B cell (primary cell): ENCODE measurements at regions of chr2 and their contacts with region 1.

Region 1: GRCh38 chr2:135052042-135052876 is at the start of gene RAB3GAP1:
- DNase-seq: peak; percentile 91
- ATAC-seq: peak; percentile 90
- H3K4me3 ChIP-seq: peak within 1 kb of the TSS; percentile 91 to 97 (median 96)
- H3K4me3 Mint-ChIP-seq: peak within 1 kb of the TSS; percentile 91
- H3K27ac ChIP-seq: peak within 1 kb of the TSS; percentile 98 to 99
- H3K27ac Mint-ChIP-seq: peak within 1 kb of the TSS; percentile 98
- H3K4me1 ChIP-seq: peaks cover 17 to 19% of the 10 kb centered on the region in 2 donors
- H3K4me1 Mint-ChIP-seq: peaks cover 37% of the 10 kb centered on the region
- H3K27me3 ChIP-seq: no peaks in the 10 kb centered on the region
- H3K27me3 Mint-ChIP-seq: no peaks in the 10 kb centered on the region
- CTCF ChIP-seq: no peak
- total RNA-seq, gene RAB3GAP1: 61.5 and 62.2 TPM in 2 replicates

Region 2: DNA sequence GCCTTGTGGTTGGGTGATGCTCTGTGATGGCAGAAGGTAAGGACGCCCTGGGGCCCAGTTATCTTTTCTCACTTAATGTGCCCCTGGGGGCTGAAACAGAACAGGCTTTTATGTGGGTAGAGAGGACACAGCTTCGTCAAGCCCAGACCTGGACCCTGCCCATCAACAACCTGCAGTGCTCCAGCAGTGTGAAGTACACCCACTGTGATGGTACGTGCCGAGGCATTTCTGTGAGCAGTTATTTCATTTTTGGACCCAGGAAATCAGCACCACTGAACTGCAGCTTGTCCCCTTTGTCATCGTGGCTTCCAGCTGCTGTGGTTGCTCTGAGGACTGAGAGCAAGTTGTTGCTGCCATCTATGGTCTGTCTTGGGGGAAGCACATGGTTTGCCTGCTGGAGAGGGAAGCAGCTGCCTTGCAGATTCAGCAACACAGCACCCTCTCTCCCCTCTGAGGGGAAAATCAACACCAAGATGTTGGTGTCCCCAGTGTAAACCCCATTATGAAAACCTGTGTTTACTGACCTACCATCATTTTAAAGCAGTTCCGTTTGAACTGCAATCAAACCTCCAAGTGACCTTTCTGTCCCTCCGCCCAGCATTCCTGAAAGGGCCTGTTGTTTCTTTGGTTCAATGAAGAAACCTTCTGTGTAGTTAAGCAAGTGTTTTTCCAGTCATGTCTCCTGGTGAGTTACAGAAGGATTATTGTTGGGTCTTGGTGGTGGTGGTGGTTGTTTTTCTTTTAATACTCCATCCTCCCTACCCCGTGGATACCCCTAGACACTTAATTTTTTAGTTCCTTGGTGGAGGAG is 640.2 kb before region 1 on chr2:
- CTCF ChIA-PET with region 1: no interaction called
- POLR2A ChIA-PET with region 1: no interaction called
- intact Hi-C with region 1: no loop called
- DNase-seq: peak; percentile 89
- ATAC-seq: peak; percentile 93
- H3K4me3 ChIP-seq: peak overlapping the region in 2 of 5 experiments; percentile 6 to 18
- H3K4me3 Mint-ChIP-seq: peak overlapping the region; percentile 59
- H3K27ac ChIP-seq: peak overlapping the region; percentile 64 to 74
- H3K27ac Mint-ChIP-seq: peak overlapping the region; percentile 86
- H3K4me1 ChIP-seq: peaks cover 45 to 50% of the 10 kb centered on the region in 2 donors
- H3K4me1 Mint-ChIP-seq: peaks cover 49% of the 10 kb centered on the region
- H3K27me3 ChIP-seq: no peaks in the 10 kb centered on the region
- H3K27me3 Mint-ChIP-seq: no peaks in the 10 kb centered on the region
- CTCF ChIP-seq: peak; percentile 81

Region 3: GRCh38 chr2:134739879-134740301 is 312.4 kb before region 1 on chr2:
- CTCF ChIA-PET with region 1: no interaction called
- POLR2A ChIA-PET with region 1: no interaction called
- intact Hi-C with region 1: loop called (anchors 10 kb)
- DNase-seq: peak; percentile 91
- ATAC-seq: peak; percentile 81
- H3K4me3 ChIP-seq: peak overlapping the region in 2 of 5 experiments; percentile 28 to 46
- H3K4me3 Mint-ChIP-seq: peak overlapping the region; percentile 62
- H3K27ac ChIP-seq: peak overlapping the region; percentile 86 to 90
- H3K27ac Mint-ChIP-seq: peak overlapping the region; percentile 93
- H3K4me1 ChIP-seq: peaks cover 64 to 68% of the 10 kb centered on the region in 2 donors
- H3K4me1 Mint-ChIP-seq: peaks cover 71% of the 10 kb centered on the region
- H3K27me3 ChIP-seq: no peaks in the 10 kb centered on the region
- H3K27me3 Mint-ChIP-seq: no peaks in the 10 kb centered on the region
- CTCF ChIP-seq: no peak

Region 4: GRCh38 chr2:134918526-134919340 is 133.5 kb before region 1 on chr2 and contains the start of gene CCNT2:
- CTCF ChIA-PET with region 1: no interaction called
- POLR2A ChIA-PET with region 1: no interaction called
- intact Hi-C with region 1: loop called (anchors 1 kb)
- DNase-seq: peak; percentile 100
- ATAC-seq: peak; percentile 82
- H3K4me3 ChIP-seq: peak within 1 kb of the TSS; percentile 78 to 98 (median 93)
- H3K4me3 Mint-ChIP-seq: peak within 1 kb of the TSS; percentile 85
- H3K27ac ChIP-seq: peak within 1 kb of the TSS; percentile 94 to 96
- H3K27ac Mint-ChIP-seq: peak within 1 kb of the TSS; percentile 94
- H3K4me1 ChIP-seq: peaks cover 31 to 32% of the 10 kb centered on the region in 2 donors
- H3K4me1 Mint-ChIP-seq: peaks cover 48% of the 10 kb centered on the region
- H3K27me3 ChIP-seq: no peaks in the 10 kb centered on the region
- H3K27me3 Mint-ChIP-seq: no peaks in the 10 kb centered on the region
- CTCF ChIP-seq: no peak
- total RNA-seq, gene CCNT2: 86.7 and 91.0 TPM in 2 replicates

Region 5: GRCh38 chr2:134943540-134943939 is 108.7 kb before region 1 on chr2:
- CTCF ChIA-PET with region 1: no interaction called
- POLR2A ChIA-PET with region 1: no interaction called
- intact Hi-C with region 1: loop called (anchors 10 kb)
- DNase-seq: peak; percentile 47
- ATAC-seq: peak; percentile 45
- H3K4me3 ChIP-seq: peak overlapping the region in 1 of 5 experiments; percentile 19
- H3K4me3 Mint-ChIP-seq: peak overlapping the region; percentile 59
- H3K27ac ChIP-seq: peak overlapping the region; percentile 42 to 58
- H3K27ac Mint-ChIP-seq: peak overlapping the region; percentile 44
- H3K4me1 ChIP-seq: peaks cover 9 to 21% of the 10 kb centered on the region in 2 donors
- H3K4me1 Mint-ChIP-seq: peaks cover 30% of the 10 kb centered on the region
- H3K27me3 ChIP-seq: no peaks in the 10 kb centered on the region
- H3K27me3 Mint-ChIP-seq: no peaks in the 10 kb centered on the region
- CTCF ChIP-seq: no peak

Region 6: DNA sequence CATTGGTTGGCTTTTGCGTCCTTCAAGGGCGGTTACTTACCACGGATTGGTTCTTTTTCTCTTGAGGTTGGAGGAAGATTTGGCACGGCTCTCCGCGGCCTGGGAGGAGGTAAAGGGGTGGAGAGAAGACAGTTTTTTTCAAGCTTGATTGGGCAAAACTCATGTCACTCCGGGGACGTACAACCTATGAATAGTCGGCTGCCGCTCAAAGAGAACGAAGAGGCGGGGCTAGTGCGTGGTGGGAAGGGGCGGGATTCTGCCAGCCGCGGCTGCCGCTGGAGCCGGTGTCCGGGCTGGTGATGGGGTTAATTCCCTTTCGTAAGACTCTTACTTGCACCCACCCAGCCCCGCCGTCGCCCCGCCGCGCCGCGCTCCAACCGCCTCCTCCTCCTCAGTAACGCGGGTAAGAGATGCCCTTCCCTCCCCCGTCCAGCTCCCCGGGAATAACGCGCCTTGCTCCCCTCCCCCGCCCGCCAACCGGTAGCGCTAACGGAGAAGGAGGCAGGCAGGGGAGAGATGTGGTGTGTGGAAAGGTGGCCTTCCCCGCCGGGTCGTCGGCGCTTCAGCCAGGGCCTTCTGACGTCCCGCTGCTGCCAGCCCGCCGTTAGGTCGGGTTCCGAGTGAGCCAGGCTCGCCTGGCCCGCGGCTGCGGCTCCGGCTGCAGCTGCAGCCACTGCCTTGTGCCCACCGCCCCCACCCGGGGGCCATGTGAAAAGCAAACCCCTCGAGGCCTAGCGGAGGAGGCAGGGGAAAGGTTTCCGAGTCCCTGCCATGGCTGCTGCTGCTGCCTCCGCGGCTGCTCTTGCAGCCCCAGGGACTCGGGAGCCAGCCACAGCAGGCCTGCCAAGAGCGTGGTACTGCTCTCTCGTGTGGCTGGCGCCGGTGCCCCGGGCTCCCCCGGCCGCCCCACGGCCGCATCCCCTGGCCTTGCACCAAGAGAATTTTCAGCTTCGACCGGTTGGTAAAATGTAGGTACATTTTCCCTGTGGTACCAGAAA is 479.3 kb after region 1 on chr2 and contains the start of gene R3HDM1:
- CTCF ChIA-PET with region 1: no interaction called
- POLR2A ChIA-PET with region 1: interaction called, 3 read pairs
- intact Hi-C with region 1: loop called (anchors 1 kb)
- DNase-seq: peak; percentile 99
- ATAC-seq: peak; percentile 79
- H3K4me3 ChIP-seq: peak within 1 kb of the TSS; percentile 81 to 100 (median 91)
- H3K4me3 Mint-ChIP-seq: no peak within 1 kb of the TSS
- H3K27ac ChIP-seq: peak within 1 kb of the TSS; percentile 86 to 88
- H3K27ac Mint-ChIP-seq: peak within 1 kb of the TSS; percentile 81
- H3K4me1 ChIP-seq: peaks cover 13 to 14% of the 10 kb centered on the region in 2 donors
- H3K4me1 Mint-ChIP-seq: peaks cover 12% of the 10 kb centered on the region
- H3K27me3 ChIP-seq: no peaks in the 10 kb centered on the region
- H3K27me3 Mint-ChIP-seq: no peaks in the 10 kb centered on the region
- CTCF ChIP-seq: peak; percentile 21
- total RNA-seq, gene R3HDM1: 52.0 and 57.8 TPM in 2 replicates

Region 7: GRCh38 chr2:135741395-135742324 is 689.4 kb after region 1 on chr2 and contains the start of gene UBXN4:
- CTCF ChIA-PET with region 1: no interaction called
- POLR2A ChIA-PET with region 1: interaction called, 7 read pairs
- intact Hi-C with region 1: loop called (anchors 1 kb)
- DNase-seq: peak; percentile 98
- ATAC-seq: peak; percentile 87
- H3K4me3 ChIP-seq: peak within 1 kb of the TSS; percentile 76 to 94 (median 91)
- H3K4me3 Mint-ChIP-seq: peak within 1 kb of the TSS; percentile 93
- H3K27ac ChIP-seq: peak within 1 kb of the TSS; percentile 94 to 95
- H3K27ac Mint-ChIP-seq: peak within 1 kb of the TSS; percentile 96
- H3K4me1 ChIP-seq: peaks cover 9 to 17% of the 10 kb centered on the region in 2 donors
- H3K4me1 Mint-ChIP-seq: peaks cover 38% of the 10 kb centered on the region
- H3K27me3 ChIP-seq: no peaks in the 10 kb centered on the region
- H3K27me3 Mint-ChIP-seq: no peaks in the 10 kb centered on the region
- CTCF ChIP-seq: peak; percentile 35
- total RNA-seq, gene UBXN4: 112 and 113 TPM in 2 replicates

Region 8: GRCh38 chr2:135876066-135876711 is 823.9 kb after region 1 on chr2 and contains the start of gene MCM6:
- CTCF ChIA-PET with region 1: no interaction called
- POLR2A ChIA-PET with region 1: no interaction called
- intact Hi-C with region 1: loop called (anchors 2 kb)
- DNase-seq: peak; percentile 96
- ATAC-seq: peak; percentile 92
- H3K4me3 ChIP-seq: peak within 1 kb of the TSS; percentile 68 to 80 (median 76)
- H3K4me3 Mint-ChIP-seq: peak within 1 kb of the TSS; percentile 95
- H3K27ac ChIP-seq: peak within 1 kb of the TSS; percentile 69 to 79
- H3K27ac Mint-ChIP-seq: peak within 1 kb of the TSS; percentile 94
- H3K4me1 ChIP-seq: peaks cover 8 to 23% of the 10 kb centered on the region in 2 donors
- H3K4me1 Mint-ChIP-seq: peaks cover 24% of the 10 kb centered on the region
- H3K27me3 ChIP-seq: no peaks in the 10 kb centered on the region
- H3K27me3 Mint-ChIP-seq: no peaks in the 10 kb centered on the region
- CTCF ChIP-seq: no peak
- total RNA-seq, gene MCM6: 29.6 and 30.0 TPM in 2 replicates